GM12878 (cell line): ENCODE measurements at regions of chr11 and their contacts with region 1.

Region 1: GRCh38 chr11:30128269-30128932 is 102.4 kb upstream of the FSHB start:
- DNase-seq: no peak
- ATAC-seq: peak; percentile 68
- H3K4me3 ChIP-seq: no peak overlapping the region
- H3K27ac ChIP-seq: no peak overlapping the region
- H3K4me1 ChIP-seq: no peaks in the 10 kb centered on the region
- H3K27me3 ChIP-seq: no peaks in the 10 kb centered on the region
- CTCF ChIP-seq: peak; percentile 59 to 69 (median 64)
- EP300 ChIP-seq: no peak
- POLR2A ChIP-seq: no peak
- RAD21 ChIP-seq: peak; percentile 57

Region 2: GRCh38 chr11:29432719-29433325 is 695.6 kb before region 1 on chr11:
- CTCF ChIA-PET with region 1: interaction called, 10 read pairs
- POLR2A ChIA-PET with region 1: no interaction called
- RAD21 ChIA-PET with region 1: no interaction called
- SMC1A ChIA-PET with region 1: interaction called, 8 read pairs
- in situ Hi-C with region 1: loop called (anchors 10 kb)
- intact Hi-C with region 1: loop called (anchors 10 kb)
- DNase-seq: no peak
- ATAC-seq: peak; percentile 40; the same call in 1 of the 3 replicates
- H3K4me3 ChIP-seq: no peak overlapping the region
- H3K27ac ChIP-seq: no peak overlapping the region
- H3K4me1 ChIP-seq: no peaks in the 10 kb centered on the region
- H3K27me3 ChIP-seq: no peaks in the 10 kb centered on the region
- CTCF ChIP-seq: peak; percentile 33 to 47 (median 37); a peak in 5 of 6 replicates
- EP300 ChIP-seq: no peak
- POLR2A ChIP-seq: no peak
- RAD21 ChIP-seq: peak; percentile 45

Region 3: GRCh38 chr11:30113326-30113873 is 15.0 kb before region 1 on chr11:
- CTCF ChIA-PET with region 1: interaction called, 40 read pairs
- POLR2A ChIA-PET with region 1: no interaction called
- RAD21 ChIA-PET with region 1: interaction called, 5 read pairs
- SMC1A ChIA-PET with region 1: interaction called, 7 read pairs
- in situ Hi-C with region 1: no loop called
- intact Hi-C with region 1: no loop called
- DNase-seq: no peak
- ATAC-seq: no peak
- H3K4me3 ChIP-seq: no peak overlapping the region
- H3K27ac ChIP-seq: no peak overlapping the region
- H3K4me1 ChIP-seq: no peaks in the 10 kb centered on the region
- H3K27me3 ChIP-seq: peaks cover 0 to 2% of the 10 kb centered on the region in 2 experiments; a peak in 1 of 4 replicates
- CTCF ChIP-seq: no peak
- EP300 ChIP-seq: no peak
- POLR2A ChIP-seq: no peak
- RAD21 ChIP-seq: no peak

Region 4: GRCh38 chr11:30239025-30239424 is 110.6 kb after region 1 on chr11:
- CTCF ChIA-PET with region 1: interaction called, 83 read pairs
- POLR2A ChIA-PET with region 1: no interaction called
- RAD21 ChIA-PET with region 1: interaction called, 32 read pairs
- SMC1A ChIA-PET with region 1: interaction called, 43 read pairs
- in situ Hi-C with region 1: no loop called
- intact Hi-C with region 1: no loop called
- DNase-seq: no peak
- ATAC-seq: no peak
- H3K4me3 ChIP-seq: no peak overlapping the region
- H3K27ac ChIP-seq: no peak overlapping the region
- H3K4me1 ChIP-seq: no peaks in the 10 kb centered on the region
- H3K27me3 ChIP-seq: 0 out of 4 replicates have a peak, but pooled peaks cover 0 to 1% of the 10 kb centered on the region in 2 experiments
- CTCF ChIP-seq: no peak
- EP300 ChIP-seq: no peak
- POLR2A ChIP-seq: no peak
- RAD21 ChIP-seq: no peak

Region 5: GRCh38 chr11:30314625-30315024 is 186.2 kb after region 1 on chr11:
- CTCF ChIA-PET with region 1: interaction called, 80 read pairs
- POLR2A ChIA-PET with region 1: no interaction called
- RAD21 ChIA-PET with region 1: interaction called, 18 read pairs
- SMC1A ChIA-PET with region 1: interaction called, 23 read pairs
- in situ Hi-C with region 1: no loop called
- intact Hi-C with region 1: loop called (anchors 1 kb)
- DNase-seq: no peak
- ATAC-seq: no peak
- H3K4me3 ChIP-seq: no peak overlapping the region
- H3K27ac ChIP-seq: no peak overlapping the region
- H3K4me1 ChIP-seq: peaks cover 17% of the 10 kb centered on the region
- H3K27me3 ChIP-seq: no peaks in the 10 kb centered on the region
- CTCF ChIP-seq: peak; percentile 39 to 55 (median 47); a peak in 5 of 6 replicates
- EP300 ChIP-seq: no peak
- POLR2A ChIP-seq: no peak
- RAD21 ChIP-seq: peak; percentile 58

Region 6: DNA sequence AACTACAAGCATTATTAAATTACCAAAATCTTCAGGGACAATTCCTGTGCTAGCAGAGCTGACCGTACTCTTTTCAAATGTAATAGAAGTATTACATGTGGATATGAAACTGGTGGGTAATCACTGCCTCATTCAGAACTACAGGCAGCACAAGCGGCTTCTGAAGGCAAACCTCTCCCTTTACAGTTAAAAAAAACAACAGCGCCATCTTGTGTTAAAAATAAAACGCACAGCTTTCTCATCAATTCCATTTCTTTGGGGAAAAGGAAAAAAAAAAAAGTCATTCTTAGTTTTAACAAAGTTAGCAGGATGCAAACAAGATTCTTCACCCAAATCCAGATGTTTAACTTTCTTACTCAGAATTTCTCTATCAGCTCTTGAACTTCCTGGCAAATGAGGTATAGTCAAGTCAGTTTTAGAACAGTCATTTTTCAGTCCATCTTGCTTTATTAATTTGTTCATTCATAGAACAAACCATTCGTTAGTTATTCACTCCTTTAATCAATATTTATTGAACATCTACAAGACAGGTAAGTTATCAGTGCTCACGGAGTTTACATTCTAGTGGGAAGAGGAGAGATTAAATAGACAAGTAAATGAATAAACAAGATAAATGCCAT is 789.6 kb after region 1 on chr11:
- CTCF ChIA-PET with region 1: interaction called, 7 read pairs
- POLR2A ChIA-PET with region 1: no interaction called
- RAD21 ChIA-PET with region 1: interaction called, 3 read pairs
- SMC1A ChIA-PET with region 1: interaction called, 6 read pairs
- in situ Hi-C with region 1: loop called (anchors 10 kb)
- intact Hi-C with region 1: loop called (anchors 5 kb)
- DNase-seq: no peak
- ATAC-seq: peak; percentile 85
- H3K4me3 ChIP-seq: no peak overlapping the region
- H3K27ac ChIP-seq: no peak overlapping the region
- H3K4me1 ChIP-seq: no peaks in the 10 kb centered on the region
- H3K27me3 ChIP-seq: no peaks in the 10 kb centered on the region
- CTCF ChIP-seq: peak; percentile 44 to 66 (median 59); a peak in 5 of 6 replicates
- EP300 ChIP-seq: no peak
- POLR2A ChIP-seq: no peak
- RAD21 ChIP-seq: peak; percentile 66